Heart left ventricle (tissue), 16 donors: ENCODE measurements at regions of chr7 and their contacts with region 1.

Region 1: DNA sequence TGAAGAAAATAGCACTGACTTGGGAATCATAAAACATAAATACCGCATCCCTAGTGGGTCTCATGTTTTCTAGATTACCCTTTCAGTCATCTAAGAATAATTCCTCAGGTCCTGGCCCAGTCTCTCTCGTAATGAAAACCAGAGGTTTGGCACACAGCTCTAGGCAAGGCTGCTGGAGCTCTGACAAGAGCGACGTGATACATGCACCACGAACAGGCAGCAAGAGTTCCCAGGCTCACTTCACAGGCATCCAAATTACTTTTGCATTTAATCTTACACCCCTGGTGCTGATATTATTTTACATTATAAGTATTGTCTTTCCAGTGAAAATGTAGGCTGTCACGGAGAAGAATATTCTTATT is 105.2 kb downstream of the THSD7A start:
- DNase-seq: peak in 4 of 5 donors; percentile 28 to 44 (median 38)
- ATAC-seq: peak in 3 of 4 donors; percentile 62 to 75 (median 70)
- H3K4me3 ChIP-seq: no peak overlapping the region
- H3K27ac ChIP-seq: no peak overlapping the region
- H3K4me1 ChIP-seq: peaks cover 0 to 6% (median 0%) of the 10 kb centered on the region in 12 donors
- H3K27me3 ChIP-seq: no peaks in the 10 kb centered on the region
- CTCF ChIP-seq: no peak
- POLR2A ChIP-seq: no peak

Region 2: GRCh38 chr7:11437987-11438386 is 288.8 kb before region 1 on chr7:
- intact Hi-C with region 1: loop called in 1 of 10 experiments (anchors 10 kb)
- DNase-seq: no peak
- ATAC-seq: no peak
- H3K4me3 ChIP-seq: no peak overlapping the region
- H3K27ac ChIP-seq: no peak overlapping the region
- H3K4me1 ChIP-seq: no peaks in the 10 kb centered on the region
- H3K27me3 ChIP-seq: no peaks in the 10 kb centered on the region
- CTCF ChIP-seq: no peak
- POLR2A ChIP-seq: no peak

Region 3: GRCh38 chr7:11786186-11786585 is 59.4 kb after region 1 on chr7:
- intact Hi-C with region 1: no loop called
- DNase-seq: no peak
- ATAC-seq: no peak
- H3K4me3 ChIP-seq: no peak overlapping the region
- H3K27ac ChIP-seq: no peak overlapping the region
- H3K4me1 ChIP-seq: no peaks in the 10 kb centered on the region
- H3K27me3 ChIP-seq: no peaks in the 10 kb centered on the region
- CTCF ChIP-seq: no peak
- POLR2A ChIP-seq: no peak